GM10248 (cell line): ENCODE measurements at regions of chr20 and their contacts with region 1.

Region 1: DNA sequence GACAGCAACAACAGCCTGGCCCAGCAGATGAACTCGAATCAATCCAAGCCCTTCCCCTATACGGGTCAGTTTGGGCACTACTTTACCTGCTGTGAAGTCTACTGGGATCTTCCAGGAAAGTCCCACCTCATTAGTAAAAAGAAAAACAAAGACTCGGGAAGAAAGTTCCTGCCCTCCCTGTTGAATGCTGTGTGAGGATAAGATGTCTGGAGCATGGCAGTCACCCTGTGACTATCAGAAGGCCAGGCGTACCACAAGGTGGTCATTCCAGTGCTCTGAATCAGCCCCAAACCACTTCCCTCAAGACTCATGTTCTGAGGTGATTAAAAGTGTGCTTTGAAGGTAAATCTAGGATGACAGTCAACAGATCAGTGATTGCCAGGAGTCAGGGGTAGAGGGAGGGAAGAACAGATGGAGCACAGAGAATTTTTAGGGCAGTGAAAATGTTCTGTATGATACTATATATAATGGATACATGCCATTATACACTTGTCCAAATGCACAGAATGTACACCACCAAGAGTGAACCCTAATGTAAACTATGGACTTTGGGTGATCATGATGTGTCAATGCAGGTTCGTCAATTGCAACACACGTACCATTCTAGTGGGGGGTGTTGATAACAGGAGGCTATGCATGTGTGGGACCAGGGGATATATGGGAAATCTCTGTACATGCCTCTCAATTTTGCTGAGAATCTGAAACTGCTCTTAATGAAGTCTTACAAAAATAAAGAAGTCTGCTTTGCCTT is 14.7 kb downstream of the FKBP1A start:
- DNase-seq: no peak
- CTCF ChIP-seq: no peak

Region 2: GRCh38 chr20:1353956-1354355 is 24.2 kb before region 1 on chr20:
- CTCF ChIA-PET with region 1: no interaction called
- POLR2A ChIA-PET with region 1: no interaction called
- DNase-seq: no peak
- CTCF ChIP-seq: no peak

Region 3: GRCh38 chr20:1392823-1393506 is 14.8 kb after region 1 on chr20 and contains the start of gene FKBP1A:
- CTCF ChIA-PET with region 1: interaction called, 25 read pairs
- POLR2A ChIA-PET with region 1: interaction called, 15 read pairs
- DNase-seq: peak; percentile 93
- CTCF ChIP-seq: no peak